ENCODE measurements at regions of chr6 and their contacts with region 1.

Region 1: DNA sequence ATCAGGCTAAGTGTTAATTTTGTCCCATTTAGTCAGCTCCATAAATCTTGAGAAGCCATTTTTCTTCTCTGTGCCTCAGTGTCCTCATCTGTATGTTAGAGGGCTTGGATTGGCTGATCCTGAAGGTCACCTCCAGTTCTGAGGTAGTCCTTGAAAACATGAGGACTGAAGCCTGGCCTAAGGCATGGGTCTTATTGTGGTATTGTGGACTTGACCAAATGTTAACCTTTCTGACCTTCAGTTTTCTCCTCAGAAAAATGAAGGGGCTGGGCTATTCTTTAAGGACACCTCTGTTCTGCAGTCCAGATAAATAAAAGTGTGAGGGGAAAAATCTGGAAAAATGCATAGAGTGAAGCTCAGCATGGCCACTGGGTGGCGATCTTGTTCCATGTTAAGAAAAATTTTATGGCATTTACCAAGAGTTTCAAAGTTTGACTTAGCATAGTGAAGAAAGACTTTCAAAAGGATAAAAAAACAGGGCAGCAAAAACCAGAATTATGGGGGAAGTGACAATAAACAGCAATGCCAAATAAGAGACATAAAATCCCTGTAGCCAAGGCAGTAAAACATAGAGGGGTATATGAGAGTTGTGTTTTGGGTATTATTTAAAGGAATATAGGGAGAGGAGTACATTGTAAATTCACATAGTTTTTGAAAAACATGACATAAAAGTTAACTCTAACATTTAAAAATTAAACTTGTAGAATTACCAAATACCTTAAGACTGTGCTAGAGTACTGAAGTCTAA is 13.2 kb upstream of the TFB1M start:
- DNase-seq: peak; percentile 75
- ATAC-seq: peak; percentile 39
- H3K4me3 ChIP-seq: no peak overlapping the region
- H3K4me3 Mint-ChIP-seq: no peak overlapping the region
- H3K27ac ChIP-seq: no peak overlapping the region
- H3K27ac Mint-ChIP-seq: no peak overlapping the region
- H3K4me1 ChIP-seq: no peaks in the 10 kb centered on the region
- H3K4me1 Mint-ChIP-seq: peaks cover 3% of the 10 kb centered on the region
- H3K27me3 ChIP-seq: no peaks in the 10 kb centered on the region
- H3K27me3 Mint-ChIP-seq: no peaks in the 10 kb centered on the region
- CTCF ChIP-seq: peak; percentile 94

Region 2: DNA sequence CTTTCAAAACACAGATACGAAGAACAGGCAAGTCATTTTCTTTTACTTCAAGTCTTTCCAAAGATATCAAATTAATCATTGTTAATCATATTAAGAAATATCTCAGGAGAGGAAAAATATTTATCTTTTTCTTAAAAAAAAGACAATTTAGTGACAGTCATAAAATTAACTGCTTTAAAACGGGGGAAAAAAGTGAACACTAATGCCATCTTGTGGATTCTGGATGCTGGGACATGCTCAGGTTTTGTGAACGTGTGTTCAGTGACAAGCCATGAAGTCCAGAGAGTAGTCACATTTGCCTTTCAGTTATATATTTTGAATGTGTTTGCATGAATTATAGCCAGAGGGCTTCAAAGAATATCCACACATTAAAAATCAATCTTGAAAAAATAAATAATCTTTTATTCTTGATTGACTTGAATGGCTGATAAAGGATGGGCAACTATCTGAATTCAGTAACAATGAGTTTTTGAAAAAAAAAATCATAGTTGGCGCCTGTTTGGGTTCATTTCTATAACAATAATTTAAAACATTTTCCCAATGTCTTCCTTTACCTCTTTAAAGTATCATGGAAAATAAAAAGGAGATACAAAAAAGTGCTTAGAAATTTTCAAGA is 202.8 kb after region 1 on chr6:
- CTCF ChIA-PET with region 1: interaction called, 19 read pairs
- POLR2A ChIA-PET with region 1: no interaction called
- intact Hi-C with region 1: loop called (anchors 1 kb)
- DNase-seq: peak; percentile 33
- ATAC-seq: no peak
- H3K4me3 ChIP-seq: no peak overlapping the region
- H3K4me3 Mint-ChIP-seq: no peak overlapping the region
- H3K27ac ChIP-seq: no peak overlapping the region
- H3K27ac Mint-ChIP-seq: no peak overlapping the region
- H3K4me1 ChIP-seq: peaks cover 3 to 4% of the 10 kb centered on the region in 2 donors
- H3K4me1 Mint-ChIP-seq: peaks cover 10% of the 10 kb centered on the region
- H3K27me3 ChIP-seq: no peaks in the 10 kb centered on the region
- H3K27me3 Mint-ChIP-seq: no peaks in the 10 kb centered on the region
- CTCF ChIP-seq: peak; percentile 61

Region 3: DNA sequence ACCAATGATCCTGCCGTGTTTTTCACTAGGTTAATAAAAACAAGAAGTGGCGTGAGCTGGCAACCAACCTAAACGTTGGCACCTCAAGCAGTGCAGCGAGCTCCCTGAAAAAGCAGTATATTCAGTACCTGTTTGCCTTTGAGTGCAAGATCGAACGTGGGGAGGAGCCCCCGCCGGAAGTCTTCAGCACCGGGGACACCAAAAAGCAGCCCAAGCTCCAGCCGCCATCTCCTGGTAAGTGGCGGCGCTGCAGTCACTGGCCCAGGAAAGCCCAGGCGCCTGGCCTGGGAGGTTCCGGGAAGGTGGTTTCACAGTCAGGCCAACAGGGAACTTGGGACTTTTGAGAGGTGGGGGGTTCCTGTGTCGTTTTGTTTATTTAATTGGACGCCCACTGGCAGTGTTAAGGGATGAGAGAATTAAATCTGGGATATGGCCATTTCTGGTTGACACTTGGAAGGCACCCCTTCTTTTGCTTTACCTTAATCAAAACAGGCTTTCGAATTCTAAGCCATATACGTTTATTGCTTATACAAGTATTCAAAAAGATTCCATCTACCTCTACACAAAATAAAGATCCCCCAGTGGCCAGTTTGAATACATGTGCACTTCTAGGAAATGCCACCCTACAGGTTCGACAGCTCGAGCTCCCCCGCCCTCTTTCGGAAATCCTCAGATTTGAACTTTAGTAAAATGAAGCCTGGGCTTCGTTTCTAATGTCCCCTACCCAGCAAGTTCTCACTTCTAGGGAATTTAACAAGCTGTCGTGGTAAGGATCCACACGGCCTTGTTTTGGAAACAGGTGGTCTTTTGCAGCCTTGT is 1856.9 kb after region 1 on chr6:
- CTCF ChIA-PET with region 1: no interaction called
- POLR2A ChIA-PET with region 1: no interaction called
- intact Hi-C with region 1: loop called (anchors 5 kb)
- DNase-seq: peak; percentile 51
- ATAC-seq: no peak
- H3K4me3 ChIP-seq: no peak overlapping the region
- H3K4me3 Mint-ChIP-seq: no peak overlapping the region
- H3K27ac ChIP-seq: no peak overlapping the region
- H3K27ac Mint-ChIP-seq: no peak overlapping the region
- H3K4me1 ChIP-seq: no peaks in the 10 kb centered on the region
- H3K4me1 Mint-ChIP-seq: peaks cover 2% of the 10 kb centered on the region
- H3K27me3 ChIP-seq: no peaks in the 10 kb centered on the region
- H3K27me3 Mint-ChIP-seq: no peaks in the 10 kb centered on the region
- CTCF ChIP-seq: peak; percentile 76

Measured in B cell (primary cell).